CD8-positive, alpha-beta memory T cell (primary cell): ENCODE measurements at regions of chr1 and their contacts with region 1.

Region 1: DNA sequence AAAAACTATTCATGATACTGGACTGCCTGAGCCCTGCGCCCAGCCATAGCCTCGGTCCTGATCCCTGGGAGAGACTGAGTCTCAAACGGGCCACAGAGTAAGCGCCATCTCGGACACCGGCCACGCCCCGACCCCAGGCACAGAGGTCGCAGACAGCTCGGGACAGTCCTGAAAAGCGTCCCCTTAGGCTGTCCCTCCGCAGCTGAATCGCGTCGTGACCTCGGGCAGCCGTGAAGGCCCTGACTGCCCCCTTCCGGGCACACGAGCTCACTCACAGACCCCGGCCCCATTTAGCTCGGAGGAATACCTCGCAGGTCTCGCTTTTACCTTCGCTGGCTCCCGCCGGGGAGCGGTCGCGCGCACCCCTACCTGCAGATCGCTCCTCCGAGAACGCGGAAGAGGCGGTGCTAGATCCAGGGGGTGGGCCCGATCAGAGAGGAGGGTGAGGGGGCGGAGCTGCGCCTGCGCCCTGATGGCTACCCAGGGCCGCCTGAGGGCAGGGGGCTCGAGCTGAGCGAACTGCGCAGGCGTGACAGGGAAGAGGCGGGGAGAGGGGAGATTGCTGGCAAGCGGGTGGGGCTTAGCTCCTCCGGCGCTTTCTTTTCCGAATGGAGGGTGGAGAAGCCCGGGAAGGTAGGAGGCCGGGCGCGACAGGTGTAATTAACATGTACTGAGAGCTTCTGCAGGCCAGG is at the start of gene MKNK1:
- DNase-seq: peak; percentile 98 to 99 (median 99)
- H3K4me3 ChIP-seq: peak within 1 kb of the TSS; percentile 95
- H3K4me3 Mint-ChIP-seq: peak within 1 kb of the TSS; percentile 90 to 98 (median 92)
- H3K27ac ChIP-seq: peak within 1 kb of the TSS; percentile 84
- H3K27ac Mint-ChIP-seq: peak within 1 kb of the TSS; percentile 86 to 98 (median 93)
- H3K4me1 ChIP-seq: peaks cover 38% of the 10 kb centered on the region
- H3K4me1 Mint-ChIP-seq: peaks cover 64 to 77% (median 75%) of the 10 kb centered on the region in 3 donors
- H3K27me3 ChIP-seq: no peaks in the 10 kb centered on the region
- H3K27me3 Mint-ChIP-seq: no peaks in the 10 kb centered on the region
- total RNA-seq, gene MKNK1: 27.9 to 32.4 TPM

Region 2: GRCh38 chr1:46616277-46617107 is 12.5 kb after region 1 on chr1 and contains the start of gene MOB3C:
- CTCF ChIA-PET with region 1: interaction called, 5 read pairs
- POLR2A ChIA-PET with region 1: interaction called, 42 read pairs
- DNase-seq: peak; percentile 54 to 77 (median 64)
- H3K4me3 ChIP-seq: peak within 1 kb of the TSS; percentile 100
- H3K4me3 Mint-ChIP-seq: peak within 1 kb of the TSS; percentile 90 to 96 (median 93)
- H3K27ac ChIP-seq: peak within 1 kb of the TSS; percentile 88
- H3K27ac Mint-ChIP-seq: peak within 1 kb of the TSS; percentile 92 to 99 (median 94)
- H3K4me1 ChIP-seq: peaks cover 55% of the 10 kb centered on the region
- H3K4me1 Mint-ChIP-seq: peaks cover 41 to 56% (median 50%) of the 10 kb centered on the region in 3 donors
- H3K27me3 ChIP-seq: no peaks in the 10 kb centered on the region
- H3K27me3 Mint-ChIP-seq: no peaks in the 10 kb centered on the region
- total RNA-seq, gene MOB3C: 10.3 to 11.3 TPM